Right cardiac atrium (tissue), 5 donors: ENCODE measurements at regions of chr10 and their contacts with region 1.

Region 1: GRCh38 chr10:43689955-43690771 is 41.5 kb upstream of the ZNF32 start:
- DNase-seq: peak; percentile 90 to 96 (median 96)
- ATAC-seq: peak; percentile 97 to 98
- H3K4me3 ChIP-seq: peak overlapping the region; percentile 35
- H3K27ac ChIP-seq: peak overlapping the region; percentile 58
- H3K4me1 ChIP-seq: peaks cover 2% of the 10 kb centered on the region
- H3K27me3 ChIP-seq: no peaks in the 10 kb centered on the region

Region 2: DNA sequence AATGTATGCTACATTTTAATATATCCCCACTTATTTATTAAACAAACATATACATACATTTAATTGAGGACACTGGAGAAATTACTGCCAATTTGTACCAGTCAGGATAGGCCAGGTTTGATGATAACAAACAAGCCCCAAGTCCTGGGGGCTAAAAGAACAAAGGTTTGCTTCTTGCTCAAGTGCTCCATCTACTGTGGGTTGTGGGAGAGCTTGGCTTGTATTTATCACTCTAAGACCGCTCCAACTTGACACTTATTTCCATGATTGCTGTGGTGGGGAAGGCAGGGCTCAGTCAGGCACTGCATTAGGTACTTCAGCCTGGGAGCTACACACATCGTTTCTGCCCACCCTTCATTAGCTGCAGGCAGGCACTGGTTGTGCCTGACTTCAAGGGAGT is 95.1 kb after region 1 on chr10:
- intact Hi-C with region 1: no loop called
- DNase-seq: no peak
- ATAC-seq: peak; percentile 40 to 51
- H3K4me3 ChIP-seq: no peak overlapping the region
- H3K27ac ChIP-seq: no peak overlapping the region
- H3K4me1 ChIP-seq: peaks cover 4% of the 10 kb centered on the region
- H3K27me3 ChIP-seq: no peaks in the 10 kb centered on the region

Region 3: DNA sequence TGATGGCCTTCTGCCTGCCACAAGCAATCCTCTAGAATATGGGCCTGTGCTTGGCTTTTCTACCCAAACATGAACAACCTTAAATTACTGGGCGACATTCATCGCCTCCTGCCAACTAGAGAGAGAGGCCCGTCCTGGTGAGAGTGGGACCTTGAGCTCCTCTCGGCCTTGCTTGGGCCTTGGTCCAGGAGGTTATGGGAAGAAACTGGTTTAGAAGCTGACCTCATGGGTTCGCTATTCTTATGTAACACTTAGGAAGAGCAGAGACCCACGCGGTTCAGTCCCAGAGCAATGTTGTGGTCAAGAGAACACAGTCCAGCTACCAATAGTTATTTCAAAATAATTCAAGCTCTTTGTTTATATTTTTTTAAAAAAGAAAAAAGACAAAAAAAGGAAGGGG is 134.8 kb after region 1 on chr10:
- intact Hi-C with region 1: loop called in 1 of 4 experiments (anchors 10 kb)
- DNase-seq: peak; percentile 79 to 90 (median 83)
- ATAC-seq: peak; percentile 92
- H3K4me3 ChIP-seq: no peak overlapping the region
- H3K27ac ChIP-seq: peak overlapping the region; percentile 96
- H3K4me1 ChIP-seq: peaks cover 2% of the 10 kb centered on the region
- H3K27me3 ChIP-seq: no peaks in the 10 kb centered on the region

Region 4: GRCh38 chr10:43863859-43864591 is 173.9 kb after region 1 on chr10:
- intact Hi-C with region 1: no loop called
- DNase-seq: peak; percentile 53 to 78 (median 74)
- ATAC-seq: peak; percentile 81 to 92
- H3K4me3 ChIP-seq: no peak overlapping the region
- H3K27ac ChIP-seq: peak overlapping the region; percentile 55
- H3K4me1 ChIP-seq: peaks cover 23% of the 10 kb centered on the region
- H3K27me3 ChIP-seq: no peaks in the 10 kb centered on the region

Region 5: DNA sequence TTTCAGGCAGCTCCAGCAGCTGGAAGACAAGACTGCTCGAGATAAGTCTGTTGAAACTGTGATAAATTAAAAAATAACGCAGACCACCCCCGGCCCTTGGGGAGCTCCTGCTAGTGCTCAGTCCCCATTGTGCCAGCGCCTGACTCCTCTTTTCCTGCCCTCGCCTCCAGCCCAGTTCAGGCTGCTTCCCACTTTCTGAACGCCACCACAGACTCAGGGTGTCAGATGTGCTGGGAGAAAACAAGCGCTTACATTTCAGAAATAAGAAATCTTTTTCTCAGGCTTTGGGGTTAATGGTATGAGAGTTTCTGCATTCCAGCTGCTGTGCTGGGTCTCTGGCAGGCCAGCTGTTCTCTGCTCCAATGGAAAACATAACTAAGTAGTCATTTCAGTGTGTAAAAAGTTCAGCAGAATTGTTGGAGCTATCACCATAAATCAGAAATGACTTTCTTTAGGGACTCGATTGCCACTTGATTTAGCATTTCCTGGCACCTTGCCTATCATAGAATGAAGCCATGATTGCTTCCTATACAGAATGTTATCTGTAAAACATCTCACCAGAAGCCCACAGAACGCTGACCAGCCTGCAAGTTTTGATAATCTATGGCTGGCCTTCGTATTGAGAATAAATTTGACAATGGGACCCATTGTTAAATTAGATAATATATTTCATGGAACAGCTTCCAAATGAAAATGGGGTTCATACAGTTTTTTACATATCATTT is 215.5 kb after region 1 on chr10:
- intact Hi-C with region 1: loop called in 1 of 4 experiments (anchors 5 kb)
- DNase-seq: peak; percentile 77 to 90 (median 89)
- ATAC-seq: peak; percentile 74 to 86
- H3K4me3 ChIP-seq: no peak overlapping the region
- H3K27ac ChIP-seq: peak overlapping the region; percentile 37
- H3K4me1 ChIP-seq: peaks cover 13% of the 10 kb centered on the region
- H3K27me3 ChIP-seq: no peaks in the 10 kb centered on the region

Region 6: GRCh38 chr10:44300666-44301649 is 610.8 kb after region 1 on chr10:
- intact Hi-C with region 1: loop called in 1 of 4 experiments (anchors 10 kb)
- DNase-seq: peak in 1 of 3 donors; percentile 63
- ATAC-seq: peak in 1 of 2 donors; percentile 61
- H3K4me3 ChIP-seq: no peak overlapping the region
- H3K27ac ChIP-seq: no peak overlapping the region
- H3K4me1 ChIP-seq: peaks cover 3% of the 10 kb centered on the region
- H3K27me3 ChIP-seq: no peaks in the 10 kb centered on the region

Region 7: GRCh38 chr10:44386546-44387052 is 696.4 kb after region 1 on chr10:
- intact Hi-C with region 1: loop called in 2 of 4 experiments (anchors 5 kb)
- DNase-seq: peak; percentile 75 to 91 (median 89)
- ATAC-seq: peak; percentile 82 to 89
- H3K4me3 ChIP-seq: no peak overlapping the region
- H3K27ac ChIP-seq: no peak overlapping the region
- H3K4me1 ChIP-seq: no peaks in the 10 kb centered on the region
- H3K27me3 ChIP-seq: no peaks in the 10 kb centered on the region